ENCODE measurements at regions of chr18 and their contacts with region 1.

Region 1: GRCh38 chr18:42114310-42114943 is 159.4 kb downstream of the PIK3C3 start:
- DNase-seq: peak; percentile 53
- H3K4me3 ChIP-seq: no peak overlapping the region
- H3K27ac ChIP-seq: no peak overlapping the region
- H3K4me1 ChIP-seq: peaks cover 5% of the 10 kb centered on the region
- H3K27me3 ChIP-seq: no peaks in the 10 kb centered on the region
- CTCF ChIP-seq: peak; percentile 80 to 91

Region 2: DNA sequence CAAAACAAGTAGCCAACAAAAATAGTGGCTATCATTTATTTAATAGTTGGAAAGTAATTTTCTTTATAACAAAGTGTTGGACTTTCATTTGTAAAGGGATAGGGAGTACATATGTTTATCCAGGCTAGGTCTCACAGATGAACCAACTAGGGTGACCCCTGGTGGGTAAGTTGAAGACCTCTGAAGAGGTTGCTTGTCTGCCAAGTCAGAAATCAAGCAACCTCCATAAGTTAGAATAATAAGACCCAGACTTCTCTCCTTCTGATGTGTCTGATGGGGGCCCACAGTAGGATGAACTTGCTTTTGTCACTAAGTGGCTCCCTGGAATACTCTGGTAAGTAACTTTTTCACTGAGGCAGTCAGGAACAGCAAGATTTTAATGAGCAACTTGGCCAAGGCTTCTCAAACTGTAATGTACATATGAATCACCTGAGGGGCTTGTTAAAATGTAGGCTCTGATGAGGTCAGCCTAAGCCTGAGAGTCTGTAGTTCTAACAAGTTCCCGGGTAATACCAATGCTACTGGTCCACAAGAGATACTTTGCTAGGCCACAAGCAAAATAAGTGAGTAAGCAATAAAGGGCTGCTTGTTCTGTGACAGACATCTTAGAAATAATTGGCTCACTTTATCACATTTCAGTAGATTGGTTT is 160.2 kb after region 1 on chr18:
- CTCF ChIA-PET with region 1: interaction called, 8 read pairs
- dilution Hi-C with region 1: no loop called
- in situ Hi-C with region 1: no loop called
- intact Hi-C with region 1: loop called (anchors 1 kb)
- DNase-seq: peak; percentile 14
- H3K4me3 ChIP-seq: no peak overlapping the region
- H3K27ac ChIP-seq: no peak overlapping the region
- H3K4me1 ChIP-seq: no peaks in the 10 kb centered on the region
- H3K27me3 ChIP-seq: no peaks in the 10 kb centered on the region
- CTCF ChIP-seq: peak; percentile 24 to 34

Region 3: GRCh38 chr18:42931491-42931890 is 817.1 kb after region 1 on chr18:
- CTCF ChIA-PET with region 1: no interaction called
- dilution Hi-C with region 1: no loop called
- in situ Hi-C with region 1: loop called in 1 of 2 experiments (anchors 25 kb)
- intact Hi-C with region 1: no loop called
- DNase-seq: no peak
- H3K4me3 ChIP-seq: no peak overlapping the region
- H3K27ac ChIP-seq: no peak overlapping the region
- H3K4me1 ChIP-seq: no peaks in the 10 kb centered on the region
- H3K27me3 ChIP-seq: no peaks in the 10 kb centered on the region
- CTCF ChIP-seq: no peak

Region 4: DNA sequence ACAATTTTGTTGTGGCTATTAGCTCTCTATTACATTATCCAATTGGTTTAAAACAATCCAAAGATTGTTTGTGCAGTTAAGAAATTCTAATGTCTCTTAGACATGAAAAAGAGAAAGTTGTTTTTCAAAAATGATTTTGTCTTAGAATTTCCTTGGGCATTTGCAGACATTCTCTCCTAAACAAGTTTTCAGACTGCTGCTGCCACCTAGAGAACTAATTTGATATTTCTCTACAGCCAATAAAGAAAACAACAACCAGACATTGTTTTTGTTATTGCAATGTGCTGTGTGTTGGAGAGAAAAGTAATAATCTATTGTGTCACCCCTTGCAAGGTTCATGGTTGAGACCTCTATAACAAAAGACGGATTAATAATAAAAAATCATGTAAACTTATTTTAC is 1281.8 kb after region 1 on chr18:
- CTCF ChIA-PET with region 1: no interaction called
- dilution Hi-C with region 1: no loop called
- in situ Hi-C with region 1: loop called in 1 of 2 experiments (anchors 25 kb)
- intact Hi-C with region 1: loop called (anchors 10 kb)
- DNase-seq: no peak
- H3K4me3 ChIP-seq: no peak overlapping the region
- H3K27ac ChIP-seq: no peak overlapping the region
- H3K4me1 ChIP-seq: peaks cover 6% of the 10 kb centered on the region
- H3K27me3 ChIP-seq: peaks cover 3% of the 10 kb centered on the region
- CTCF ChIP-seq: peak; percentile 53 to 62